ENCODE measurements at regions of chr16 and their contacts with region 1.

Region 1: DNA sequence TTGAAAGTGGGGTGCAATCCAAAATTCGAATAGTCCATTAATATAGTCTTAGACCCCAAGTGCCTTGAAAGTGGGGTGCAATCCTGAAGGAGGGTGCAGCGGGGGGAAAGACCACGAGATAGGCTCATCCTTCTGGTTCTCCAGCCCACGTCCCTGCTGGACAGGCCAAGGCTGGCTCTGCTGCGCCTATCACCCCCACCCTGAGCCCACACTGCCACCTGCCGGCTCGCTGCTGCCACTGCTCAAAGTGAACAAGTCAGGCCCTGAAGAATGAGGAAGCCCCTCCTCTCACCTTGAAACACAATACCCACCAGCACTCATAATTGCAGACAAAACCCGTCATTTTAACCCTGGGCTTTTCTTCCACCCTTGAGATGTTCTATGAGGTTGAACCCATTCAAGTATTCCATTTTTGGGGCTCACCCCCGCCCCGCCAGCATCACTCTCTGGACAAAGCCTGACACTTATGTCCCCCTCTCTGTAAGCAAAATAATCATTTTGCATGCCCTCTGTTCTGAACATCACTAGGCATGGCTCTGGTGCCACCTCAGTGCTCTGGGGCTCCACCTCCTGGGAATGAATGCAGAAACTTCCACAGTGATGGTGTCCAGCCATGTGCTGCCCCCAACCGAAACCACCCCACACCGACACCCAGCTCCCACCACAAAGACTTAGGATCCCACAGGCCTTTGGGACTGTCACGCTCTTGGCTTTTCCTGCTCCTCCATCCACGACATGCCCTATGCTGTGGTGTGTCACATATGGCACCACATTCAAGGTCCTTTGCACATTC is 56.8 kb downstream of the BEAN1 start:
- DNase-seq: peak; percentile 88 to 92
- ATAC-seq: peak; percentile 75
- H3K4me3 ChIP-seq: no peak overlapping the region
- H3K27ac ChIP-seq: no peak overlapping the region
- H3K4me1 ChIP-seq: no peaks in the 10 kb centered on the region
- H3K27me3 ChIP-seq: no peaks in the 10 kb centered on the region

Region 2: DNA sequence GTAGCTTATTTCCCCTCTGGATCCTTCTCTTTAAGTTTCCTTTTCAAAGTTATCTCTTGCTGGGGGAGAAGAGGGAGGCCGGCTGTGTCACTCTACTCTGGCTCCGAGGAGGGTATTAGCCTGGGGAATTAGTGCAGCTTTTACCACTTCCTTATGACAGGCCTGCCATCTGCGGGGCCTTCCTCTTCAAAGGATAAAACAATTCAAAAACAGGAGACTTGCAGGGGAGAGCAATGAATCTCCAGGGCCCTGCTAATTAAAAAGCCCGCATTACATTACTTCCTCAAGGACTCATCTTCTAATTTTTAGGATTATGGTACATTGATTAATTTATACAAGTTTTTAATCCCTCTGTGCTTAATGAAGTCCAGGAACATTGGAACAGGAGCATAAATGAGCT is 308.2 kb before region 1 on chr16:
- intact Hi-C with region 1: no loop called
- DNase-seq: no peak
- ATAC-seq: no peak
- H3K4me3 ChIP-seq: no peak overlapping the region
- H3K27ac ChIP-seq: no peak overlapping the region
- H3K4me1 ChIP-seq: no peaks in the 10 kb centered on the region
- H3K27me3 ChIP-seq: peaks cover 0 to 2% of the 10 kb centered on the region in 2 donors

Region 3: DNA sequence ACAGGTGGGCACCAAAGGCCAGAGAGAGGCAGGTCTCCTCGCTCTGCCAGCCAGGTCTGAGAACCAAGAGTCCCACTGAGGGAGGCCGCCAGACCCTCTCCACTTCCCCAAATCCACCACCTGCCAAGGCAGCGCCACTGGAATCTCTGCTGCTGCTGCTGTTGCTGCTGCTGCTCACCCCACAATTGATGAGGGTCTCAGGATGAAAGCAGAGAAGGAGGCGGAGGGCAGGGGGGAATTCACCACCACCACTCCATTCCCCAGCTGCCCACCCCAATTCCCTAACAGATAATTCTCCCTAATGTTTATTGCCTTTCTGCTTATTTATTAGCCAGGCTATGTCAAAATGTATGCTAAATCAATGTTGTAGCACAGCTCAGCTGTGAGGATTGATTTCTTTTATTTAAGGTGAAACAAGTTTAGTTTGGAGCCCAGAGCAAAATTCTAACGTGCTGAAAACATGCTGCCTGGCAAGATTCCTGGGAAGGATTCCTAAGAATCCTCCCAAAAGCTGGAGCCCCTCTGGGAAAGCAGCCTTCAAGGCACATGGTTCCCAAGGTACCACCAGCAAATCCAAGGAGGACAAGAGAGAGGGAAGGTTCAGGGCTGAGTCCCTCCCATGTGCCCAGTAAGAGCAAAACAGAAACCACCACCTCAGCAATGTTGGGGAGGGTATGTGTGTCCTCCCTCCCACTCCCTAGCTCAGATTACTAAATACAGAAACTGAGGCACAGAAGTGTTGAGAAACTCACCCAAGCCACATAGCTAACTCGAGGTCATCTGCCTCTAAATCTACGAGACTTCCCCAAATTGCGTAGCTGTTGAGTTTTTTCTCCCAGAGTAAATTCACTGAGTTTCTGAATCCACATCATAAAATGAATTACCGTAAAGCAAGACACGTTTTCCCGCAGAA is 129.6 kb before region 1 on chr16:
- intact Hi-C with region 1: loop called in 1 of 2 experiments (anchors 5 kb)
- DNase-seq: no peak
- ATAC-seq: no peak
- H3K4me3 ChIP-seq: no peak overlapping the region
- H3K27ac ChIP-seq: no peak overlapping the region
- H3K4me1 ChIP-seq: no peaks in the 10 kb centered on the region
- H3K27me3 ChIP-seq: peaks cover 0 to 1% of the 10 kb centered on the region in 2 donors

Region 4: DNA sequence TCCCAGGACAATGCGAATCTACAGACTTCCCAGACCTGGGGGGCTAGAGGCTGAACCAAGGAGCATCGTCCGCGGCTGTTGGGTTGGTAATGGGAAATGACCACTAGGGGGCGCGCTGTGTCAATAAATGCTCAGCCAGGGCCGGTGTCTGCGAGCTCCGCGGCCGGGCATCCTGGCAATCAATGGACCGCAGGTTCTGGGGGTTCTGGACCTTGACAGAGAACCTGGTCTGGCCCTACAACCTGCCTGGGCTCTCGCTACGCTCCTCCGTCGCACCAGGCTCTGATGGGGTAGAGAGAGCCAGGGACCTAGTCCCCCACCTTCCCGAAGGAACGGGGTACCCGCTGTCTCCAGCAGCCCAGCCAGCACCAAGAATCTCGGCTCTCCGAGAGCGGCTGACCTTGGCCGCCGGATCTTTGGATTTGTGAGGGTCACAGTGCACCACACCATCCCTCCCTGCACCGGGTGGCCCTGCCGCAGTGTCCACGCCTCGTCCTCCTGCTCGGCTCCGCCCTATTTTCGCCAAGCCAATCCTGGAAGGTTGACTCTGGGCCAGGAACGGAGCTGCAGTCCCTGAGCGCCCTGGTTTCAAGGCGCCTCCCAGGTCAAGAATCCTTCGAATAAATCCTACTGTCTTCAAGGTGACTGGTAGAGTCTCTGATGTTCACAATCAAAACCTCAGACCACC is 77.2 kb before region 1 on chr16:
- intact Hi-C with region 1: loop called (anchors 2 kb)
- DNase-seq: peak; percentile 89 to 96
- ATAC-seq: peak; percentile 94
- H3K4me3 ChIP-seq: peak overlapping the region in 1 of 2 donors; percentile 45
- H3K27ac ChIP-seq: no peak overlapping the region
- H3K4me1 ChIP-seq: no peaks in the 10 kb centered on the region
- H3K27me3 ChIP-seq: no peaks in the 10 kb centered on the region

Region 5: GRCh38 chr16:66516808-66517585 is 33.1 kb after region 1 on chr16:
- intact Hi-C with region 1: loop called in 1 of 2 experiments (anchors 5 kb)
- DNase-seq: peak; percentile 98
- ATAC-seq: peak; percentile 93
- H3K4me3 ChIP-seq: no peak overlapping the region
- H3K27ac ChIP-seq: peak overlapping the region; percentile 92 to 99
- H3K4me1 ChIP-seq: peaks cover 0 to 5% of the 10 kb centered on the region in 2 donors
- H3K27me3 ChIP-seq: no peaks in the 10 kb centered on the region

Region 6: DNA sequence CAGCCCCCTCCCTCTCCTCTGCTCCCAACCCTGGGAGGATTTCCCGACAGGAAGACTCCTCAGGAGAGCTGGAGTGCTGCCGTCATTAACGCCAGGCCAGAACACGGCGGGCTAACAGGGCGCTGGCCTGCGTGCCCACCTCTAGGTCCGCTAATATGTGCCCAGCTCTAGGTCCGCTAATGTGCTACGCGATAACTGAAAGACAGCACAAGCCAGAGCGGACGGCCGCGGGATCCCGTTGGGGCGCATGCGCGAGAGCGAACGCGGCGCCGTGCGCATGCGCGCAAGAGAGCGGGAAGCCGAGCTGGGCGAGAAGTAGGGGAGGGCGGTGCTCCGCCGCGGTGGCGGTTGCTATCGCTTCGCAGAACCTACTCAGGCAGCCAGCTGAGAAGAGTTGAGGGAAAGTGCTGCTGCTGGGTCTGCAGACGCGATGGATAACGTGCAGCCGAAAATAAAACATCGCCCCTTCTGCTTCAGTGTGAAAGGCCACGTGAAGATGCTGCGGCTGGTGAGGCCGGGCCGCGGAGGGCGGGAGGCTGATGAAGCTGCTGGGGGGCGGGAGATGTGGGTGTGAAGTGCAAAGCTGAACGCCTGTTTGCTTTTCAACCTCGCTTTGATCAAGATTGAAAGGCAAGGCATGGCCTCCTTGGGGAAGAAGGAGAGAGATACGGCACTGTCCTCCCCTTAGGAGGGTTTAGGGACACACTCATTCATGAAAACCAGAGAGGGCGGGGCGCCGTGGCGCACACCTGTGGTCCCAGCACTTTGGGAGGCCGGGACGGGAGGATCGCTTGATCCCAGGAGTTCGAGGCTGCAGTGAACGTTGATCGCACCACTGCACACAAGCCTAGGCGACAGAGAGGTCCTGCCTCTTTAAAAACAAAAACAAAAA is 68.6 kb after region 1 on chr16 and contains the start of gene CKLF:
- intact Hi-C with region 1: loop called in 1 of 2 experiments (anchors 5 kb)
- DNase-seq: peak; percentile 93 to 97
- ATAC-seq: peak; percentile 93
- H3K4me3 ChIP-seq: peak within 1 kb of the TSS; percentile 62 to 64
- H3K27ac ChIP-seq: peak within 1 kb of the TSS in 1 of 2 donors; percentile 92
- H3K4me1 ChIP-seq: peaks cover 3 to 5% of the 10 kb centered on the region in 2 donors
- H3K27me3 ChIP-seq: no peaks in the 10 kb centered on the region
- total RNA-seq, gene CKLF: 23.4 to 44.4 TPM

Region 7: DNA sequence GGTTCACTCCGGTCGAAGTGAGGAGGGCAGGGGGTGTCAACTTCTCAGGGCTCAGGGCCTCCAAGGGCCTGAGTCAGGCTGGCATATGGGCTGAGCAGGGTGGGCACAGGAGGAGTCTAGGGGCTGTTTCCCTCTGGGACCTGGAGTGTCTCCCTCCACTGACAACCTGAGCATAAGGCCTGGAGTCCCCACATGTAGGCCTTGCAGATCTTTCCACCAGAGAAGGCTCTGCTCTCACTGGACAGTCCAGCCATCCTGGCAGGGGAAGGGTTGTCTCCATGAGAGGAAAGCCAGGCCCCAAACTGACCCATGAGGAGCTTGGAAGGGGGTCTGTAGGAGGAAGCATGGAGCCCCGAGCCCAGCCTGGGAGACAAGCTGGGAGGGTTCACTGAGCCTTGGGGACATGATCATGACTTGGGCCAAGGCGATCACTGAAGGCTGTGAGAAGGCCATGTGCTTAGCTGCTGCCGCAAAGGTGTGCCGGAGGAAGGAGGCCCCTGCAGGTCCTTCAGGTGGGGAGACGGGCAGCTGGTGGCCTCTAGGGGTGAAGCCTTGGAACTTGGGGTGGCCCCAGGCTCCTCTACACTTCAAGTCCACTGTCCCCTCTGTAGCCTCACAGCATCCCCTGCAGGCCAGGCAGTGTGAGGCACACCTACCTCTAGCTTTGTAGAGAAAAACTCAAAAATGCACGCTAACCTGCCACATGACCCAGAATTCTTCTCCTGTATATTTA is 105.3 kb after region 1 on chr16:
- intact Hi-C with region 1: loop called in 1 of 2 experiments (anchors 10 kb)
- DNase-seq: peak in 1 of 2 donors; percentile 80
- ATAC-seq: peak; percentile 80
- H3K4me3 ChIP-seq: no peak overlapping the region
- H3K27ac ChIP-seq: no peak overlapping the region
- H3K4me1 ChIP-seq: no peaks in the 10 kb centered on the region
- H3K27me3 ChIP-seq: no peaks in the 10 kb centered on the region

Measured in aorta (tissue), 5 donors.